Endothelial cell of umbilical vein (primary cell): ENCODE measurements at regions of chr13 and their contacts with region 1.

Region 1: DNA sequence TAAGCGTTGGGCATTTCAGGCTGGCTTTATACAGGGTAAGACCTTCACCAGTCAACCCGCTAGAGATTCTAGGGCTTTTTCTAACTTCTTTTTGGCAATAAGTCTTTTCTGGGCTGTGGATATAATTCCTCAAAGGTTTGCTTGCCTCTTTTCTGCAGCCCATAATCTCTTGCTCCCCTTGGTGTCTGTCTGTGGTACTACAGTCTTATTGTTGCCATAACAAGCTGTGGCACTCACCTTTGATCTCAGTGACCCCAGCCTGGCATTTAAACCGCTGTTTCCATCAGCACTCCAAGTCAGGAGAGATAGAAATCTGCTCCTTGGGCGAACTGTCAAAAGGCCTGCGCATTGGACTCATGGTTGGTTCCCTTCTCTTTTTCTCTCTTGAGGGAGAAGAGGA is 14.5 kb upstream of the MPHOSPH8 start:
- DNase-seq: peak; percentile 48
- H3K4me3 ChIP-seq: no peak overlapping the region
- H3K27ac ChIP-seq: no peak overlapping the region
- H3K4me1 ChIP-seq: no peaks in the 10 kb centered on the region
- H3K27me3 ChIP-seq: no peaks in the 10 kb centered on the region
- CTCF ChIP-seq: peak; percentile 52 to 68
- POLR2A ChIP-seq: no peak

Region 2: DNA sequence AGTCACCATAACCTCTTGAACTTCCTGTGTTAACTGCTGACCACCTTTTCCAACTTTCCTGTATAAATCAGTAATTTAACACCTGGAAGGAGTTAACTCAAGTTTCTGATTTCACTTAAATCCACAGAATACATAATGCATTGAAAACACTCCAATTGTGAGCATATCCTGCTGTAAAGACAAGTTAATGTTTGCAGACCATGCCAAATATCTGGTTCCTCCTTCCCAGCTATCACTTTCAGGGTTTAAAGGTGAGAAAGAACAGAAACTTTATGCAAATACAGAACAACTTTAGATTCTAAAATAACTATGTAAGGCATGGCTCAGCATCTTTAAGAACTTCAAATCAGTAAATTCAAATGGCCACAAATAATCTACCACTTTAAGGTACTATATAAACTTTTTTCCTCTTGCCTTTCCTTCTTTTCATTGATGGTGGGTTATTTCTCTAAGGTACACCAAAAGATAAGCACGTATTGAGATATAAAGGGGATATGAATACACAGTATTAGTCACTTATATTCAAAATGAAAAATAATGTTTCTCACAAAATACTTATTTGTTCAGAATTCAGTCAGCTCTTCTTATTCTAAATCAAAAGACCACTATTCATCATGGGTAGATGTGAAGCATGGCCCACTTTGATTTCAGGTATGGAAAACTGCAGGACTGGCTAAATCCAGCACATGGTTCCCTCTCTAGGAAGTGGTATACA is 50.9 kb before region 1 on chr13:
- CTCF ChIA-PET with region 1: no interaction called
- POLR2A ChIA-PET with region 1: no interaction called
- dilution Hi-C with region 1: no loop called
- intact Hi-C with region 1: loop called (anchors 2 kb)
- DNase-seq: no peak
- H3K4me3 ChIP-seq: no peak overlapping the region
- H3K27ac ChIP-seq: no peak overlapping the region
- H3K4me1 ChIP-seq: no peaks in the 10 kb centered on the region
- H3K27me3 ChIP-seq: peaks cover 0 to 1% of the 10 kb centered on the region in 2 experiments
- CTCF ChIP-seq: no peak
- POLR2A ChIP-seq: no peak